ENCODE measurements at regions of chr6 and their contacts with region 1.

Region 1: GRCh38 chr6:42453031-42453653 is 1.4 kb upstream of the TRERF1 start:
- DNase-seq: peak; percentile 42 to 90 (median 76)
- ATAC-seq: peak; percentile 74
- H3K4me3 ChIP-seq: peak overlapping the region; percentile 82 to 98
- H3K4me3 Mint-ChIP-seq: peak overlapping the region; percentile 100
- H3K27ac ChIP-seq: peak overlapping the region in 1 of 2 experiments; percentile 72
- H3K27ac Mint-ChIP-seq: no peak overlapping the region
- H3K4me1 ChIP-seq: peaks cover 29% of the 10 kb centered on the region
- H3K4me1 Mint-ChIP-seq: peaks cover 33% of the 10 kb centered on the region
- H3K27me3 ChIP-seq: no peaks in the 10 kb centered on the region
- H3K27me3 Mint-ChIP-seq: no peaks in the 10 kb centered on the region
- CTCF ChIP-seq: no peak

Region 2: GRCh38 chr6:42260972-42261371 is 192.2 kb before region 1 on chr6:
- CTCF ChIA-PET with region 1: interaction called, 7 read pairs
- POLR2A ChIA-PET with region 1: interaction called, 4 read pairs
- intact Hi-C with region 1: loop called in 1 of 2 experiments (anchors 5 kb)
- DNase-seq: peak in 6 of 9 experiments; percentile 35 to 70 (median 53)
- ATAC-seq: peak; percentile 81
- H3K4me3 ChIP-seq: no peak overlapping the region
- H3K4me3 Mint-ChIP-seq: no peak overlapping the region
- H3K27ac ChIP-seq: no peak overlapping the region
- H3K27ac Mint-ChIP-seq: peak overlapping the region; percentile 45
- H3K4me1 ChIP-seq: peaks cover 3% of the 10 kb centered on the region
- H3K4me1 Mint-ChIP-seq: peaks cover 12% of the 10 kb centered on the region
- H3K27me3 ChIP-seq: no peaks in the 10 kb centered on the region
- H3K27me3 Mint-ChIP-seq: no peaks in the 10 kb centered on the region
- CTCF ChIP-seq: peak; percentile 49

Region 3: GRCh38 chr6:42313941-42314570 is 139.1 kb before region 1 on chr6:
- CTCF ChIA-PET with region 1: interaction called, 3 read pairs
- POLR2A ChIA-PET with region 1: interaction called, 3 read pairs
- intact Hi-C with region 1: loop called in 1 of 2 experiments (anchors 1 kb)
- DNase-seq: peak in 1 of 9 experiments; percentile 41
- ATAC-seq: no peak
- H3K4me3 ChIP-seq: no peak overlapping the region
- H3K4me3 Mint-ChIP-seq: no peak overlapping the region
- H3K27ac ChIP-seq: peak overlapping the region in 1 of 2 experiments; percentile 10
- H3K27ac Mint-ChIP-seq: peak overlapping the region; percentile 68
- H3K4me1 ChIP-seq: peaks cover 15% of the 10 kb centered on the region
- H3K4me1 Mint-ChIP-seq: peaks cover 50% of the 10 kb centered on the region
- H3K27me3 ChIP-seq: no peaks in the 10 kb centered on the region
- H3K27me3 Mint-ChIP-seq: no peaks in the 10 kb centered on the region
- CTCF ChIP-seq: no peak

Region 4: GRCh38 chr6:42367353-42368011 is 85.7 kb before region 1 on chr6:
- CTCF ChIA-PET with region 1: no interaction called
- POLR2A ChIA-PET with region 1: interaction called, 14 read pairs
- intact Hi-C with region 1: loop called (anchors 2 to 5 kb)
- DNase-seq: peak in 5 of 9 experiments; percentile 17 to 66 (median 44)
- ATAC-seq: peak; percentile 36
- H3K4me3 ChIP-seq: peak overlapping the region; percentile 22 to 28
- H3K4me3 Mint-ChIP-seq: peak overlapping the region; percentile 81
- H3K27ac ChIP-seq: peak overlapping the region; percentile 44 to 82
- H3K27ac Mint-ChIP-seq: peak overlapping the region; percentile 92
- H3K4me1 ChIP-seq: peaks cover 61% of the 10 kb centered on the region
- H3K4me1 Mint-ChIP-seq: peaks cover 84% of the 10 kb centered on the region
- H3K27me3 ChIP-seq: no peaks in the 10 kb centered on the region
- H3K27me3 Mint-ChIP-seq: no peaks in the 10 kb centered on the region
- CTCF ChIP-seq: no peak

Region 5: DNA sequence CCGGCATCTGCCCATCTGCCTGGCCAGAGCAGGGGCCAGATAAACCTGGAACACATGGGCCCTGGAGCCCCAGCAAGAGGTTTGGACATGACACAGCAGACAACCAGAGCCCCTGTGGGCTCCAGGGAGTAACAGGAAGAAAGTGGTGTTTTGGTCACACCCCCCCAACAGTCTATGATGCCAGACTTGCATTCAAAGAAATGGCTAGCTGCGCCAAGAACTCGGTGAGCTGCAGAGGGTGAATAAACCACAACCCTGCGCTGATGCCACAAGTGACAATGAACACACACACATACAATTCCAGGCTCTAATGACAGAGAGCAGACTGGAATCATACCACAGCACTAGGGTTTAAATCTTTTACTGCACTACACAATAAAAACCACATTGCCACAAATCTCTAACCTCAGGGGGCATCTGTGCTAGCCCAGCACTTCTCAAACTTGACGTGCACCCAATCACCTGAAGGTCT is 35.5 kb before region 1 on chr6:
- CTCF ChIA-PET with region 1: no interaction called
- POLR2A ChIA-PET with region 1: interaction called, 5 read pairs
- intact Hi-C with region 1: loop called (anchors 1 to 5 kb)
- DNase-seq: peak; percentile 25 to 88 (median 61)
- ATAC-seq: peak; percentile 86
- H3K4me3 ChIP-seq: no peak overlapping the region
- H3K4me3 Mint-ChIP-seq: peak overlapping the region; percentile 49
- H3K27ac ChIP-seq: no peak overlapping the region
- H3K27ac Mint-ChIP-seq: peak overlapping the region; percentile 79
- H3K4me1 ChIP-seq: peaks cover 40% of the 10 kb centered on the region
- H3K4me1 Mint-ChIP-seq: peaks cover 69% of the 10 kb centered on the region
- H3K27me3 ChIP-seq: no peaks in the 10 kb centered on the region
- H3K27me3 Mint-ChIP-seq: no peaks in the 10 kb centered on the region
- CTCF ChIP-seq: no peak

Region 6: DNA sequence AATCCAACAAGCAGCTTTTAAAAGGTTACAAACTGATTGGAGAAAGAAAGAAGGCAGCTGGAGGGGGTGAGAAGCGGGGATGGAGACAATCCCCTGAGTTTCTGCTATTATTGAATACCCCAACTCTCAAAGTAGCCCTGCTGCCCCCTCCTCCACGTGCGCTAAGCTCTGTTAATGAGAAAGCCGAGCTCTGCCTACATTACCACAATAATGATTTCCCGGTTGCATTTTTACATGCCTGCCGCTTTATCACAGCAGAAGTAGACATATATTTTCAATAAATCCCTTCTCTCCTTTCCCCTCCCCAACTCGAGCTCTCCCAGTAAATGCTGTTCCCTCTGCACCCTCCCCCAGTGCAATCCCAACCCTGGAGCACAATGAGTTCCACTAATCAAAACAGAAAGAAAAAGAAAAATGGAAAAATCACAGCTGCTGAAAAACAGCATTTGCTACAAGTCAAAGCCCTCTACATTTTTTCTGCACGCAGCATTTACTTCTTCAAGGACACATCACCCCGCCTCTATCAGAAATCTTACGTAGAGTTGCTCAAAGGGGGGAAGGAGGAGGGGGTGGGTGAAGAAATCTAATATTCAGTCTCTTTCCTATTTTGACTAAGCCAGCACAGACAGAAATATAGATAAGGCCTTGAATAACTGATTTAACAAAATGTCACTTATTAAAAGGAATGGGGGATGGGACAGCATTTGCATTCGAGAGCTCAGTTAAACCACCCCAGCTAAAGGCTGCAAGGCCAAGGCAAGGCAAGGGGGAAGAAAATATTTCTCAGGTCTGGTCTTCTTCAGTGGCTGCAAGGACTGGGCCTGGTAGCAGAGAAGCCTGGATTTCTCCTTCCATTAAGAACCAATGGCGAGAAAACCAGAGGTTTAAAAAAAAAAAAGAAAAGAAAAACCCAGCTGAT is 12.1 kb before region 1 on chr6:
- CTCF ChIA-PET with region 1: interaction called, 6 read pairs
- POLR2A ChIA-PET with region 1: interaction called, 20 read pairs
- intact Hi-C with region 1: loop called in 1 of 2 experiments (anchors 1 kb)
- DNase-seq: peak in 1 of 9 experiments; percentile 31
- ATAC-seq: peak; percentile 55
- H3K4me3 ChIP-seq: no peak overlapping the region
- H3K4me3 Mint-ChIP-seq: peak overlapping the region; percentile 38
- H3K27ac ChIP-seq: peak overlapping the region in 1 of 2 experiments; percentile 30
- H3K27ac Mint-ChIP-seq: peak overlapping the region; percentile 79
- H3K4me1 ChIP-seq: peaks cover 40% of the 10 kb centered on the region
- H3K4me1 Mint-ChIP-seq: peaks cover 74% of the 10 kb centered on the region
- H3K27me3 ChIP-seq: no peaks in the 10 kb centered on the region
- H3K27me3 Mint-ChIP-seq: no peaks in the 10 kb centered on the region
- CTCF ChIP-seq: no peak